Activated CD4-positive, alpha-beta T cell treated with anti-CD3 and anti-CD28 coated beads, Interleukin-2, amount 10 ng/mL, durations not matched to agents 7 days and 5 days (primary cell): ENCODE measurements at regions of chr9 and their contacts with region 1.

Region 1: DNA sequence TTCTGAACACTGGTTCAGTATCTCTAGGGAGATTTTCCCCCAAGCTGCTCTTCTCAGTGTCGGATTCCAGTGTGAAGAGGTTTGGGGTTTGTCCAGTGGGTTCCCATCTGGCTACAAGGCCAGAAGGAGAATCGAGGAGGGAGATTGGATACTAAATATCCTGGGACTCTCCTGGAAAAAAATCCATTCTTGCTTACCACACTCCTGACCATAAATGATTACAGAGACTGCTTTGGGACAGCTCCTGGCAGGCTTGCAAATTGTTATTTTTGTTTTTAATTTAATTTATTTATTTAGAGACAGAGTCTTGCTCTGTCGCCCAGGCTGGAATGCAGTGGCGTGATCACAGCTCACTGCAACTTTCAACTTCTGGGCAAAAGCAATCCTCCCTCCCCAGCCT is 4.7 kb upstream of the SUSD1 start:
- DNase-seq: no peak
- H3K4me3 Mint-ChIP-seq: no peak overlapping the region
- H3K27ac Mint-ChIP-seq: peak overlapping the region; percentile 81
- H3K4me1 Mint-ChIP-seq: peaks cover 63% of the 10 kb centered on the region
- H3K27me3 Mint-ChIP-seq: peaks cover 30% of the 10 kb centered on the region

Region 2: DNA sequence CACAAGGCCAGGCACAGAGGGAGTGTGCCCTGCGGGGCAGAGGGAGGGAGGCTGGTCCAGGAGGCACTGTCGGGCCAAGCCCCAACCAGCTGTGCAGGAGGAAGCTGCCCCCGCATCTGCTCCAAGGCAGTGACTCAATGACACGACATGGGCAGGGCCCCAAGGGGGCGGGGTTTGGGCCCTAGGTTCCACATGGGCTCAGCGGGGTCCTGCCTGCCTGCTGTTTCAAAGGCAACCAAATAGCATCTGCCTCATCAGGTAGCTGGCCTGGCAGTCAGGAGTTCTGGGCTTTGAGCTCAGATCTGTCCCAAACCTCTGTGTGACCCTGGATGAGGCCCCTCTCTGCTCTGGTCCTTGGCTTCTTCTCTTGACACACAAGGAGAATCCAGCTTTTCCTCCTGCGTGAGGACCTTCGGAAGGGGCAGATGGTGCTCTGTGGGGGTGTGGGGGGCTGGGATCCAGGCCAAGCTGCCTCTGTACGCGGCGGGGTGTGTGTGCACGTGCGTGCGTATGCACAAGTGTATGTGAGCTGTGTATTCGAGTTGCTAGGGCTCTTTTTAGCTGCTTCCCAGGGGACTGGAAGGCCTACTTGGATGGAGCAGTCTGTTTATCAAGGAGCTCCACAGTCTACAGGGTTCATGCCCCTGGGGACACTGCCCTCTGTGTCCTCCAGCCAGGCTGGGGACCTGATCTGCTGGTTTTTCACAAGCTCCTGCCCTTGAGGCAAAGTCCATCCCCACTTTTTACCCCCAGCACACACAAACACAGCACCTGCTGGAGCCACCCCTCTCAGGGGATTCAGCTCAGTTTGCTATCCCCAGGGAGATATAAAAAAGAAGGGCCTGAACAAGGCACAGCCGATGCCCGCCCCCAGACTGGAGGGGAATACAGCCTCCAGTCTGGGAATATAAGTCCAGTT is 1422.6 kb after region 1 on chr9:
- CTCF ChIA-PET with region 1: no interaction called
- POLR2A ChIA-PET with region 1: interaction called, 12 read pairs
- DNase-seq: no peak
- H3K4me3 Mint-ChIP-seq: no peak overlapping the region
- H3K27ac Mint-ChIP-seq: no peak overlapping the region
- H3K4me1 Mint-ChIP-seq: peaks cover 3% of the 10 kb centered on the region
- H3K27me3 Mint-ChIP-seq: no peaks in the 10 kb centered on the region